Calu3 (cell line): ENCODE measurements at regions of chr2 and their contacts with region 1.

Region 1: DNA sequence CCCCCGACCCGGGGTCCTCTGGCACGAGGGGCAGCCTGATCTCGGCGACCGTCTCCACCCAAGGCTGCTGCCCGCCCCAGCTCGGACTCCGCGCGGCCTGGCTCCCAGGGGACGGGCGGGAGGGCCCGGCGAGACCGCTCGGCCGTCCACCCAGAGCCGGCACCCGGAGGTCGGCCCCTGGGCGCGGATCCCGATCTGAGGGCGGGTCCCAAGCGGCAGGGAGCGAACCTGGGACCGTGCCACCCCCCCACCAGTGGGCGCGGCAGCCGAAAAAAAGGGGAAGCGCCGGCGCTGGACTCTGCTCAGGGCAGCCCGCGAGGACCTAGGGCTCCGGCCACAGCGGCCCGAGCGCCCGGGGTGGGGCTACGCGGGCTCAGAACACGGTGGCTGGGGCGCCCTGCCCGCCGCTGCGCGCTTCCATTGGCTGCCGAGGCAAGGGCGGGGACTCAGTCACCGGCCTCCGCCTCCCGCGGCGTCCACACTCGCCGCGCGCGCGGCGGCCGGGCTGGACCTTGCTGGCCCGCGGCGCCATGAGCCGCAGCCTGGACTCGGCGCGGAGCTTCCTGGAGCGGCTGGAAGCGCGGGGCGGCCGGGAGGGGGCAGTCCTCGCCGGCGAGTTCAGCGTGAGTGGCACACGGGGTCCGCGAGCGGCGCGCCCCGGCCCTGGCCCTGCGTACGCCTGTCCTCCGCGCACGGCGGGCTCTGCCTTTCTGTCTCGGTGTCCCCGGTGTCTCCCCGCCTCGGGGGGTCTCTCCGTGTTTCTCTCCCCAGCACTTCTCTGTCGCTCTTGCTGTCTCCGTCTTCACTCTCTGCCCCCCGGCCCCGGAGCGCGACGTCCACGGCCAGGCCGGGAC is at the start of gene PTPN18:
- DNase-seq: peak; percentile 88
- H3K4me3 Mint-ChIP-seq: peak within 1 kb of the TSS; percentile 99
- H3K27ac Mint-ChIP-seq: peak within 1 kb of the TSS; percentile 64
- H3K4me1 Mint-ChIP-seq: peaks cover 15% of the 10 kb centered on the region
- H3K27me3 Mint-ChIP-seq: no peaks in the 10 kb centered on the region
- CTCF ChIP-seq: no peak
- total RNA-seq, gene PTPN18: 62.9 and 66.0 TPM in 2 replicates

Region 2: GRCh38 chr2:130342533-130343275 is 13.1 kb before region 1 on chr2 and contains the start of gene IMP4:
- CTCF ChIA-PET with region 1: interaction called, 15 read pairs
- intact Hi-C with region 1: no loop called
- DNase-seq: peak; percentile 94
- H3K4me3 Mint-ChIP-seq: peak within 1 kb of the TSS; percentile 86
- H3K27ac Mint-ChIP-seq: peak within 1 kb of the TSS; percentile 82
- H3K4me1 Mint-ChIP-seq: peaks cover 17% of the 10 kb centered on the region
- H3K27me3 Mint-ChIP-seq: no peaks in the 10 kb centered on the region
- CTCF ChIP-seq: no peak
- total RNA-seq, gene IMP4: 79.6 and 89.4 TPM in 2 replicates

Region 3: DNA sequence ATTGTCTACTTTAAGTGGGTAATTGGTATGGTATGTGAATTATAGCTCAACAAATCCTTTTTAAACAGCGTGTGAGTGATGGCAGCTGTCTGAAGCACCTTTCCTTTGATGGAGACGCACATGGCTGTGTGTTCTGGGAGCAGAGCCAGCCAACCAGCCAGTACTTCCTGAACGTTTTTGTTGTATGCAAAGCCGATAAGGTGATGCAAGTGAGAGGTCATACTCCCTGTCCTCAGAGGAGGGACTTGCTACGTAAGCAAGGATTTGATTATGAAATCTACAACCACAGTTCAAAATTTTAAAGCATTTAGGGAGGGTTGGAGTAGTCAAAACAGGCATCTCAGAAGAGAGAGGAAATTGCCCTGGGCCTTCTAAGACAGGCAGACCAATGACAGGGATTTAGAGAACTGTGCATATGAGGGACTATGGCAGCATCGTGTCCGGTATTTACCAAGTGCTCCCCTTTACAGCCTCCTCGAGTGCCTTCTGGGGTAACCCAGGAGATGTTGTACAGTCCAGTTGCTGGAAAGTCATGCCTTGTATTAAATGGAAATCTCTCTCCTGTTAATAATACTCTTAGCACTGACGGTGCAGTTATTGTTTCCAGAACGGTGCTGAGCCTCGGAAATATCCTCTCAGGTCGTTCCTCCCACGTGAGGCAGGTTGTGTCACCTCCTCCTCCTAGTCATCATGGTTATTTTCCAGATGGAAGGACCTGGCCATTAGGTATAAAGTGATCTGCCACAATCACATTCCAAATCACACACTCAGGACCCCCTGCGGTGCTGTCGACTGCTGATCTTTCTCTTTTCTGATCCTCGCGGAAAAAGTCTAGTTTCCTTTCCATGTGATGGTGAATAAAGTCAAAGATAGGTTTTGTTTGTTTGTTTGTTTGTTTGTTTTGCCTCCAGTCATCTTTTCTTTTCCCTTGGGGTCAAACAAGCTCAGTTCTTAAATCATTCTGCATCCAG is 509.3 kb after region 1 on chr2:
- CTCF ChIA-PET with region 1: no interaction called
- intact Hi-C with region 1: no loop called
- DNase-seq: peak; percentile 47
- H3K4me3 Mint-ChIP-seq: no peak overlapping the region
- H3K27ac Mint-ChIP-seq: peak overlapping the region; percentile 22
- H3K4me1 Mint-ChIP-seq: peaks cover 23% of the 10 kb centered on the region
- H3K27me3 Mint-ChIP-seq: peaks cover 14% of the 10 kb centered on the region
- CTCF ChIP-seq: no peak